ENCODE measurements at regions of chr11 and their contacts with region 1.

Region 1: DNA sequence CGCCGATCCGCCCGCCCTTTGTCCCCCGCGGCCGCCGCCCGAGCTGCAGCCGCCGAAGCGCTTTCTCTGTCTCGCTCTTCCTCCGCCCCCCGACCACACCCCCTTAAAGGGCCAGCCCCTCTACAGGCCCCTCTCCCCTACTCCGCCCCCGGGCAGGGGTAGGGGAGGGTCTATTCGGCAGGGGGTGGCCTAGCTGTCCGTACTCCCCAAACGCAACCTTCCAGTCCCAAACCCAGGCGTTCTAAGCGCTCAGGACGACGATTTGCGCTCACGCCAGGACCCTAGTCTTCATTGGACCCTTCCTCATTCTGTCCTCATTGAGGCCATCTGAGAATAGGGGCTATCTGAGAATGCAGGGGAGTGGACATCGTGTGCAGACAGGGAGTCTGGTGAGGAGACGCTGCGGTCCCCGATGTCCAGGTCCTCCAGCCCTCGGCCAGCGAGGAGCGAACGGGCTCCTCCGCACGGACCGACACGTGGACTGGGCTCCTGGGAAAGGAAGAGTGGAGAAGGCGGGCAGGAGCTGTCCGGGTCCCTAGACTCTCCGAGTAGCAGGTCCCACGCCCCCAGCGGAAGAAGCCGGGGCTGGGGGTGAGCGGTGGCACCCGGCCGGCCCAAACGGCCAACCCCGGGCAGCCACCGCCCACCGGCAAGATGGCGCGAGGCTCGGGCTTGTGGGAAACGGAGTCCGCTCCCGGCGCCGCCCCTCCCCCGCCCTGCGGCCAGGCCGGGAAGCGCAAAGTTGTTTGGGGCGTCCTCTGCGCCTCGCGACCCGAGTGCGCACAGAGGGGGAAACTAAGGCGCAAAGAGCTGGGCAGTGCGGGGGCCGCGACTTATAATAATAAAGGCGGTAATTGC is at the start of gene PPP1R14B:
- DNase-seq: no peak
- H3K4me3 ChIP-seq: peak within 1 kb of the TSS; percentile 94
- H3K27me3 ChIP-seq: no peaks in the 10 kb centered on the region
- CTCF ChIP-seq: no peak
- polyA plus RNA-seq, gene PPP1R14B: 174 and 283 TPM in 2 replicates

Region 2: GRCh38 chr11:64204464-64204989 is 42.6 kb before region 1 on chr11:
- CTCF ChIA-PET with region 1: interaction called, 46 read pairs
- POLR2A ChIA-PET with region 1: no interaction called
- DNase-seq: peak; percentile 73
- H3K4me3 ChIP-seq: no peak overlapping the region
- H3K27me3 ChIP-seq: no peaks in the 10 kb centered on the region
- CTCF ChIP-seq: peak; percentile 82

Region 3: DNA sequence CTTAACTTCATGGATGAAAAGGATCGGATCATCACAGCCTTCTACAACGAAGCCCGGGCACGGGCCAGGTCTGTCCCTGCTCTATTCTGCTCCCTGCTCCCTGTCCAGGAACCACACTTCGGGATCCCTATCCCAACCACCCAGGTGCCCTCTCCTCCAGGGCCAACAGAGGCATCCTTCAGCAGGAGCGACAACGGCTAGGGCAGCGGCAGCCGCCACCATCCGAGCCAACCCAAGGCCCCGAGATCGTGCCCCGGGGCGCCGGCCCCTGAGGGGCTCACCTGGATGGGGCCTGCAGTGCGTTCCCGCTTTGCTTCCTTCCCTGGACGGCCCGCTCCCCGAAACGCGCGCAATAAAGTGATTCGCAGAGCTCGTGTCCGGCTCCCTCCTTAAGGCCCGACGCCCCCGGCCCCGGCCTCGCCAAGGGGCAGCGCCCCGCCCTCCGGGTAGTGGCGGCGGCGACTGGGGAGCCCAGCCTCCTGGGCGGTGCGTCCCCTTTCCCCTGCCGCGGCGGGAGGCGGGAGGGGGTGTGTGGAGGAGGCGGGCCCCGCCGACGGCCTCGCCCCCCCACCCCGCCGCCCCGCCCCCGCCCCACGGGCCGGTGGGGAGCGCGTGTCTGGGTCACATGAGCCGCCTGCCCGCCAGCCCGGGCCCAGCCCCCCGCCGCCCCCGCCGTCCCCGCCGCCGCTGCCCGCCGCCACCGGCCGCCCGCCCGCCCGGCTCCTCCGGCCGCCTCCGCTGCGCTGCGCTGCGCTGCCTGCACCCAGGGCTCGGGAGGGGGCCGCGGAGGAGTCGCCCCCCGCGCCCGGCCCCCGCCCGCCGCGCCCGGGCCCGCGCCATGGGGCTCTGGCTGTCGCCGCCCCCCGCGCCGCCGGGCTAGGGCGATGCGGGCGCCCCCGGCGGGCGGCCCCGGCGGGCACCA is 12.9 kb before region 1 on chr11 and contains the start of gene VEGFB:
- CTCF ChIA-PET with region 1: interaction called, 18 read pairs
- POLR2A ChIA-PET with region 1: no interaction called
- DNase-seq: no peak
- H3K4me3 ChIP-seq: peak within 1 kb of the TSS; percentile 56
- H3K27me3 ChIP-seq: no peaks in the 10 kb centered on the region
- CTCF ChIP-seq: no peak
- polyA plus RNA-seq, gene VEGFB: 10.2 and 13.2 TPM in 2 replicates

Region 4: GRCh38 chr11:64263021-64263946 is 16.2 kb after region 1 on chr11:
- CTCF ChIA-PET with region 1: interaction called, 56 read pairs
- POLR2A ChIA-PET with region 1: no interaction called
- DNase-seq: no peak
- H3K4me3 ChIP-seq: no peak overlapping the region
- H3K27me3 ChIP-seq: no peaks in the 10 kb centered on the region
- CTCF ChIP-seq: no peak

Region 5: GRCh38 chr11:64269380-64270234 is 22.5 kb after region 1 on chr11:
- CTCF ChIA-PET with region 1: interaction called, 56 read pairs
- POLR2A ChIA-PET with region 1: no interaction called
- DNase-seq: peak; percentile 99
- H3K4me3 ChIP-seq: peak overlapping the region; percentile 66
- H3K27me3 ChIP-seq: no peaks in the 10 kb centered on the region
- CTCF ChIP-seq: no peak

Region 6: GRCh38 chr11:64341851-64342791 is 95.0 kb after region 1 on chr11:
- CTCF ChIA-PET with region 1: interaction called, 15 read pairs
- POLR2A ChIA-PET with region 1: no interaction called
- DNase-seq: peak; percentile 40
- H3K4me3 ChIP-seq: peak overlapping the region; percentile 41
- H3K27me3 ChIP-seq: peaks cover under 1% of the 10 kb centered on the region; the same call in 1 of the 2 replicates
- CTCF ChIP-seq: peak; percentile 31; the same call in 1 of the 2 replicates

Measured in BJ (cell line).